Adrenal gland (tissue), 19 donors: ENCODE measurements at regions of chr1 and their contacts with region 1.

Region 1: GRCh38 chr1:37859507-37860345 is at the start of gene MTF1:
- DNase-seq: peak; percentile 96 to 99 (median 98)
- H3K4me3 ChIP-seq: peak within 1 kb of the TSS; percentile 55 to 98 (median 82)
- H3K27ac ChIP-seq: peak within 1 kb of the TSS; percentile 73 to 87 (median 83)
- H3K4me1 ChIP-seq: peaks cover 9 to 32% of the 10 kb centered on the region in 2 donors
- H3K27me3 ChIP-seq: no peaks in the 10 kb centered on the region
- CTCF ChIP-seq: peak; percentile 89 to 94 (median 92)
- POLR2A ChIP-seq: peak; percentile 38 to 63
- total RNA-seq, gene MTF1: 2.3 to 28.0 (median 5.9) TPM

Region 2: GRCh38 chr1:37807555-37808368 is 52.0 kb before region 1 on chr1 and contains the starts of genes C1orf122 and YRDC:
- intact Hi-C with region 1: loop called (anchors 5 to 10 kb)
- DNase-seq: peak; percentile 94 to 97 (median 95)
- H3K4me3 ChIP-seq: peak within 1 kb of the TSS; percentile 74 to 95 (median 86)
- H3K27ac ChIP-seq: peak within 1 kb of the TSS; percentile 75 to 98 (median 93)
- H3K4me1 ChIP-seq: peaks cover 17 to 34% of the 10 kb centered on the region in 2 donors
- H3K27me3 ChIP-seq: no peaks in the 10 kb centered on the region
- CTCF ChIP-seq: no peak
- POLR2A ChIP-seq: peak; percentile 76 to 84
- total RNA-seq, gene C1orf122: 54.8 to 173 (median 86.3) TPM
- total RNA-seq, gene YRDC: 8.3 to 31.1 (median 11.8) TPM

Region 3: GRCh38 chr1:38123391-38123992 is 263.8 kb after region 1 on chr1:
- intact Hi-C with region 1: no loop called
- DNase-seq: no peak
- H3K4me3 ChIP-seq: no peak overlapping the region
- H3K27ac ChIP-seq: no peak overlapping the region
- H3K4me1 ChIP-seq: no peaks in the 10 kb centered on the region
- H3K27me3 ChIP-seq: no peaks in the 10 kb centered on the region
- CTCF ChIP-seq: no peak
- POLR2A ChIP-seq: no peak